ENCODE measurements at regions of chr1 and their contacts with region 1.

Region 1: DNA sequence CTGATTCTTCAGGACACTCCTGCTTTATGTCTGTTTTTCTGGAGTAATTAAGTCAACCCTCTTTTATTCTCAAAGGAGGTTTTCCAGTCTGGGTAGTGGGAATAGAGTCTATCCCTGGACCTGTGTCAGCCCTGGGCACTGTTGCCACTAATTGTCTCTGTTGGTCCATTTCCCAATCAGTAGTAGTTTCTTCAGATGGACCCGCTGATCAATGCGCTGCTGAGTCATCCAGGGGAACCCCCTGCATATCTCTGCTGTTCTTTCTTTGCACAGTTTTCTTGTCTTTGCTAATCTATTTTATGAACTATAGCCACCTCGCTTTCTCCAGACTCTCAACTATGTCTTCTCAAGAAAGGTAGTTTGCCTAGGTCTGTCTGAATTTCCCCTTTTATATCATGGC is 82.5 kb downstream of the TNNI3K start:
- DNase-seq: no peak
- ATAC-seq: no peak
- H3K4me3 ChIP-seq: no peak overlapping the region
- H3K27ac ChIP-seq: no peak overlapping the region
- H3K4me1 ChIP-seq: no peaks in the 10 kb centered on the region
- H3K27me3 ChIP-seq: no peaks in the 10 kb centered on the region
- CTCF ChIP-seq: no peak

Region 2: GRCh38 chr1:72601035-72601674 is 1716.5 kb before region 1 on chr1:
- intact Hi-C with region 1: loop called in 1 of 2 experiments (anchors 5 kb)
- DNase-seq: no peak
- ATAC-seq: no peak
- H3K4me3 ChIP-seq: no peak overlapping the region
- H3K27ac ChIP-seq: no peak overlapping the region
- H3K4me1 ChIP-seq: no peaks in the 10 kb centered on the region
- H3K27me3 ChIP-seq: no peaks in the 10 kb centered on the region
- CTCF ChIP-seq: no peak